Panc1 (cell line): ENCODE measurements at regions of chr19 and their contacts with region 1.

Region 1: GRCh38 chr19:40090241-40091204 is at the start of gene ZNF780A:
- DNase-seq: peak; percentile 100
- ATAC-seq: peak; percentile 99
- H3K4me3 ChIP-seq: peak within 1 kb of the TSS; percentile 36 to 48
- H3K27ac ChIP-seq: peak within 1 kb of the TSS; percentile 83
- H3K4me1 ChIP-seq: peaks cover 15% of the 10 kb centered on the region
- H3K27me3 ChIP-seq: no peaks in the 10 kb centered on the region; the same call in 1 of the 2 replicates
- CTCF ChIP-seq: no peak
- total RNA-seq, gene ZNF780A: 251 TPM

Region 2: GRCh38 chr19:39494661-39495060 is 595.9 kb before region 1 on chr19:
- CTCF ChIA-PET with region 1: no interaction called
- POLR2A ChIA-PET with region 1: interaction called, 14 read pairs
- in situ Hi-C with region 1: no loop called
- intact Hi-C with region 1: no loop called
- DNase-seq: no peak
- ATAC-seq: no peak
- H3K4me3 ChIP-seq: no peak overlapping the region
- H3K27ac ChIP-seq: no peak overlapping the region
- H3K4me1 ChIP-seq: peaks cover 20% of the 10 kb centered on the region
- H3K27me3 ChIP-seq: peaks cover 4% of the 10 kb centered on the region
- CTCF ChIP-seq: no peak

Region 3: DNA sequence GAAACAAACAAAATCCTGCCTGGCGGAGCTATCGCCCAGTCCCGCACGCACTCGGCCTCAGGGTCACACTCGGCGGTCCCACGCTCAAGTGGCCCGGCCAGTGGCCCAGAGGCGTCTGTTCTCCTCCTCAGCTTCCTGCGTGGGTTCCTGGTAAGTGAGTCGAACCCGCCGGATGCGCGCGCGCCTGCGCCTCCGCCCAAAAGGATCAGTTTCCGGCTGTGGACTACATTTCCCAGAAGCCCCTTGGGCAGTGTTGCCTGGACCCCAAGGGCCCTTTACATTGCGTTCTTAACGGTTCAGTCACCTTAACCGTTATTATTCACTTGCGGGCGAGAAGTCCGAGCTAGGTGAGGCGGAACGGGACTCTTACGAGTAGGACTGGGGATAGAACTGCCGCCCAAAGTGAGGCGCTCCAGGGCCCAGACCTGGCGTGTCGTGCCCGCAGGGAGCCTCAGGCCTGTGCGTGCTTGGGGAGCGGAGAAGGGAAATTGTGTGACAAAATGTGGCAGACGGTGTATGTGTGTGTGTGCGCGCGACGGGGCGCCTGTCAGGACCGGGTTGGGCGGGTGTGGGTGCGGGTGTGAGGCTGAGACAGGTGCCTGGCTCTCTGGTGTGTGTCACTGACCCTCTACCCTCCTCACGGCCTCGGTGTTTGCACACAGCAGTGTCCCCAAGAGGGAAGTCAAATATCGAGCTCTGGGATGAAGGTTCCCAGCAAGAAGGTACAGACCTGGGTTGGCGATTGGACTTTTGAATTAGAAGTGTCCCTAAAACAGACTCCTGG is 93.5 kb before region 1 on chr19 and contains the start of gene ZNF546:
- CTCF ChIA-PET with region 1: interaction called, 3 read pairs
- POLR2A ChIA-PET with region 1: interaction called, 12 read pairs
- in situ Hi-C with region 1: loop called (anchors 5 kb)
- intact Hi-C with region 1: no loop called
- DNase-seq: peak; percentile 100
- ATAC-seq: peak; percentile 98
- H3K4me3 ChIP-seq: peak within 1 kb of the TSS; percentile 35 to 49
- H3K27ac ChIP-seq: peak within 1 kb of the TSS; percentile 83
- H3K4me1 ChIP-seq: peaks cover 19% of the 10 kb centered on the region
- H3K27me3 ChIP-seq: no peaks in the 10 kb centered on the region
- CTCF ChIP-seq: no peak
- total RNA-seq, gene ZNF546: 68.4 TPM

Region 4: DNA sequence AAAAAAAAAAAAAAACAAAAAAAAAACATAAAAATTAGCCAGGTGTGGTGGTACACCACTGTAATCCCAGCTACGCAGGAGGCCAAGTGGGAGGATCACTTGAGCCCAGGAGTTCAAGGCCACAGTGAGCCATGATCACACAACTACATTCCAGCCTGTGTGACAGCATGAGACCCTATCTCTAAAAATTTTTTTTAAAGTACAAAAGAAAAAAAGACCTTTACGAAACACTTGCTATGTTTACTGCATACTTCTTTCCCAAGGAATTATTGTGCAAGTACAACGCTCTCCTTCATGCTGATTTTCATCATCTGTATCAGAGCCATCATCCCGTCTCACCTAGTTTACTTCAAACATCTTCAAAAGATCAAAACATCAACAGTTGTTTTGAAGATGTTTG is 28.9 kb after region 1 on chr19:
- CTCF ChIA-PET with region 1: interaction called, 3 read pairs
- POLR2A ChIA-PET with region 1: interaction called, 15 read pairs
- in situ Hi-C with region 1: no loop called
- intact Hi-C with region 1: no loop called
- DNase-seq: no peak
- ATAC-seq: no peak
- H3K4me3 ChIP-seq: no peak overlapping the region
- H3K27ac ChIP-seq: no peak overlapping the region
- H3K4me1 ChIP-seq: no peaks in the 10 kb centered on the region
- H3K27me3 ChIP-seq: peaks cover 46% of the 10 kb centered on the region
- CTCF ChIP-seq: no peak

Region 5: DNA sequence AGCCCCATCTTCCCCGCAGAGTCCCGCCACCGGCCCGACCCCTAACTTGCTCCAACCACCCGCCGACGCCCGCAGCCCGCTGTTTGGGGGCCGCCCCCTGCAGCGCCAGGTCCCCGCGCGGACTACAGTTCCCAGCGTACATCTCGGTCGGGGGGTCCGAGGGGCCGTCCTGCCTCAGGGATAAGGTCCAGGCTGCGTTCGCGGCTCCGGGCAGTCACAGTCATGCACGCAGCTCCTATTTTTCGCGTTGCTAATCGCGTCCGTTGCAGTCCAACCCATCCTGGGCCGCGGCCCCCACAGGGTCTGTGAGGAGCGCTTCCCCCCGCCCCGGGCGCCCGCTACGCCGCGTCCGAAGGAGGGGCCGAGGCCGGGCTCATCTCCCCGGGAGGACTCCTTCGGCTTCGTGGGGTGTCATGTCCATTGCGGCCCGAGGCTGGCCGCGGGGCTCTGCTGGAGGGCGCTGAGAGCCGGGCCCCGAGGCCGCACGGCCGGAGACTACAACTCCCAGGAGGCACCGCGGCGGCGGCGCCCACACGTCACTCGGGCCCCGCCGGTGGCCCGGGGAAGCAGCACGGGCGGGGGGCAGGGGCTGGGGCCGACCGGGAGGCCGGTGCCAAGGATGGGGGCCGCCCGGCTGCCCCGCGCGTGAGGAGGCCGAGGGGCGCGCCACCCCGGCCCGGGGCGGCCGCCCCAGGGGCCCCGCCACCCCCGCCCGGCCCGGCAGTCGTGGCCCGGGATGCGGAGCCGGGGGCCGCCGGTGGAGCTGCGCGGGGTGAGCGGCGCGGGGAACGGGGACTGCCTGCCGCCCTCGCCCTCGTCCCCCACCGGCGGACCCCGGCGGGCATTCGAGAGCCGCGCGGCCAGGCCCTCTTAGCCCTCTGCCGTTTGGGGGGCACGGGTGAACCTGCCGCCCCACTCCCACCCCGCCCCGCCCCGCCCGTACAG is 100.6 kb after region 1 on chr19 and contains the start of gene MAP3K10:
- CTCF ChIA-PET with region 1: interaction called, 3 read pairs
- POLR2A ChIA-PET with region 1: interaction called, 3 read pairs
- in situ Hi-C with region 1: loop called (anchors 5 kb)
- intact Hi-C with region 1: no loop called
- DNase-seq: peak; percentile 99
- ATAC-seq: peak; percentile 97
- H3K4me3 ChIP-seq: peak within 1 kb of the TSS; percentile 36 to 57
- H3K27ac ChIP-seq: peak within 1 kb of the TSS; percentile 49
- H3K4me1 ChIP-seq: peaks cover 23% of the 10 kb centered on the region
- H3K27me3 ChIP-seq: peaks cover 9% of the 10 kb centered on the region
- CTCF ChIP-seq: no peak
- total RNA-seq, gene MAP3K10: 255 TPM

Region 6: DNA sequence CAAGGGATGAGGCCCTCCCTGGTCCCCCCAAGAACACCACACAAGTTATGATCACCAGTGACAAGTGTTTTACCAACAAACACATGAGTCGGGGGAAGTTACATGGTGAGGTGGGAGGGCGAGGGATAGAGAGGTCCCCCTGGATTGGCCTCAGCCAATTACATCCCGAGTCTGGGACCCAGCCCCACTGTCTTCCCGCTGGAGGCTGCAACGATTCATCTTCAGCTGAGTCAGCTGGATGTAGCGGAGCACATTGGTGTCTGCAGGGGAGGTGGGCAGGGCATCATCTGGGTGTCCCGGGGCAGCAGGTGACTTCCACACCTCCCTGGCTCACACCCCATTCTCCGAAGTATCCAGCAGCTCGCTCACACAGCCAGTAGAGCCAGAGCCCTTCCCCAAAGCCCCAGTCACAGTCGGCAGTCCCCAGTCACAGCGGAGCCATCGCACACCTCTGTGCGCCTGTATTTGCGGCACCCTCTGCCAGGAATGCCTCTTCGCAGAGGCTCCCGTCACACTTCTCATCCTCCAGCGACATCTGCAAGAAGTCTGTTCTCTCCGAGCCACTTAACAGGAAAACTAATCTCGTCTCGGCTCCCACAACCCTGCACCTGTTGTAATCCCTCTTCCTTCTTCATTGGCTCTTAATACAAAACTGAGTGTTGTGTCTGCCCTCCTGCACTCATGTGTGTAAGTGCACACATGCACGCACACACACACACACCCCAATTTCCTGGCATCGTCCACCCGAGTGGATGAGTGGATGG is 125.7 kb after region 1 on chr19:
- CTCF ChIA-PET with region 1: no interaction called
- POLR2A ChIA-PET with region 1: no interaction called
- in situ Hi-C with region 1: no loop called
- intact Hi-C with region 1: no loop called
- DNase-seq: no peak
- ATAC-seq: no peak
- H3K4me3 ChIP-seq: no peak overlapping the region
- H3K27ac ChIP-seq: no peak overlapping the region
- H3K4me1 ChIP-seq: peaks cover 27% of the 10 kb centered on the region
- H3K27me3 ChIP-seq: peaks cover 23% of the 10 kb centered on the region
- CTCF ChIP-seq: no peak

Region 7: DNA sequence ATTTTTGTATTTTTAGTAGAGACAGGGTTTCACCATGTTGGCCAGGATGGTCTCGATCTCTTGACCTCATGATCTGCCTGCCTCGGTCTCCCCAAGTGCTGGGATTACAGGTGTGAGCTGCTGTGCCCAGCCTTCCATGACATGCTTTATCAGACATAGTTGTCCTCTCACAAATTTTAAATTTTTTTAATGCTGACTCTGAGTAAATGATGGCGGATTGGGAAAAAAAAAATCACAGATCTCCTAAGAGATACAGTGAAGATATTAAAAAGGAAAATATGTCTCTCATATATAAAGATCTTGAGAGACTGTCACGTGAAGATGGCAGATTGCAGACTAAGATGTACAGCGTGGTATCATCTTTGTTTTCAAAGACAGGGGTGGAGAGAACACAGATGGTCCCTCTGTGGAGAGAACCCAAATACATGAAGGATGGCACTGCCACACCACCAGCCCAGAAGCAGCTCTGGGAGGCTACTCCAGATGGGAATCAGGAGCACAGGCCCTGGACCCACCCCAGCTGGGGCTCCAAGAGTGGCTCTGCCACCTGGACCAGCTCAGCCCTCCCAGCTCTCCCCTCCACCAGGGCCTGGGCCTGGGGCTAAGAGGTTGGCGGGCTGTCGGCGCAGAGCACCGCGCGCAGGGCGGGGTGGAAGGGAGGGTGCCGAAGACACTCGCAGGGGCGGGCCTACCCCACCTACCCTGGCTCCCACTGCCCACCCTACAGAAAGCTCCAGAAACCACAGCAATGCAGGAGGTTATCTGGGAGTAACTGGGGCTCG is 156.0 kb after region 1 on chr19:
- CTCF ChIA-PET with region 1: no interaction called
- POLR2A ChIA-PET with region 1: no interaction called
- in situ Hi-C with region 1: no loop called
- intact Hi-C with region 1: no loop called
- DNase-seq: no peak
- ATAC-seq: peak; percentile 3
- H3K4me3 ChIP-seq: no peak overlapping the region
- H3K27ac ChIP-seq: no peak overlapping the region
- H3K4me1 ChIP-seq: no peaks in the 10 kb centered on the region
- H3K27me3 ChIP-seq: no peaks in the 10 kb centered on the region
- CTCF ChIP-seq: no peak

Region 8: GRCh38 chr19:40553885-40554857 is 463.6 kb after region 1 on chr19:
- CTCF ChIA-PET with region 1: no interaction called
- POLR2A ChIA-PET with region 1: no interaction called
- in situ Hi-C with region 1: no loop called
- intact Hi-C with region 1: no loop called
- DNase-seq: no peak
- ATAC-seq: no peak
- H3K4me3 ChIP-seq: no peak overlapping the region
- H3K27ac ChIP-seq: no peak overlapping the region
- H3K4me1 ChIP-seq: no peaks in the 10 kb centered on the region; the same call in 1 of the 2 replicates
- H3K27me3 ChIP-seq: no peaks in the 10 kb centered on the region
- CTCF ChIP-seq: no peak

Region 9: DNA sequence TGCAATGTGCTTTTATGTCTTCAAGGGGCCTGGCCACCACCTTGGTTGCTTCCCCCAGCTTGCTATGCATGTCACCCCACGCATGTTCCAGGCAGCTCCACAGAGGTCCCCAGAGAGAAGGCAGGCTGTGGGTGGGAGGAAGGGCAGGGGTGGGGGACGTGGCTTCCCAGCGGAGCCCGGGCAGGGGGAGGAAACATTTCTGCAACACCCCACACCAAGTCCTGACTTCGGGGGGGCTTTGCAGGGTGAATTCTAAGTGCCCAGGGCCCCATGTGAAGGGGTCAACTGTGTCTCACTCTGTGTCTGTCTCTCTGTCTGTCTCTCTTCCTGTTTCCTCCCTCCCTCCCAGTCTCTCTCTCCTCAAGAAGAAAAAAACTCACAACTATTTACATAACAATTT is 550.2 kb after region 1 on chr19:
- CTCF ChIA-PET with region 1: no interaction called
- POLR2A ChIA-PET with region 1: no interaction called
- in situ Hi-C with region 1: no loop called
- intact Hi-C with region 1: no loop called
- DNase-seq: no peak
- ATAC-seq: no peak
- H3K4me3 ChIP-seq: no peak overlapping the region
- H3K27ac ChIP-seq: no peak overlapping the region
- H3K4me1 ChIP-seq: peaks cover 7% of the 10 kb centered on the region; the same call in 1 of the 2 replicates
- H3K27me3 ChIP-seq: no peaks in the 10 kb centered on the region
- CTCF ChIP-seq: no peak